Activated CD4-positive, alpha-beta T cell treated with anti-CD3 and anti-CD28 coated beads, Interleukin-2, amount 10 ng/mL, durations not matched to agents 7 days and 5 days (primary cell): ENCODE measurements at regions of chr12 and their contacts with region 1.

Region 1: DNA sequence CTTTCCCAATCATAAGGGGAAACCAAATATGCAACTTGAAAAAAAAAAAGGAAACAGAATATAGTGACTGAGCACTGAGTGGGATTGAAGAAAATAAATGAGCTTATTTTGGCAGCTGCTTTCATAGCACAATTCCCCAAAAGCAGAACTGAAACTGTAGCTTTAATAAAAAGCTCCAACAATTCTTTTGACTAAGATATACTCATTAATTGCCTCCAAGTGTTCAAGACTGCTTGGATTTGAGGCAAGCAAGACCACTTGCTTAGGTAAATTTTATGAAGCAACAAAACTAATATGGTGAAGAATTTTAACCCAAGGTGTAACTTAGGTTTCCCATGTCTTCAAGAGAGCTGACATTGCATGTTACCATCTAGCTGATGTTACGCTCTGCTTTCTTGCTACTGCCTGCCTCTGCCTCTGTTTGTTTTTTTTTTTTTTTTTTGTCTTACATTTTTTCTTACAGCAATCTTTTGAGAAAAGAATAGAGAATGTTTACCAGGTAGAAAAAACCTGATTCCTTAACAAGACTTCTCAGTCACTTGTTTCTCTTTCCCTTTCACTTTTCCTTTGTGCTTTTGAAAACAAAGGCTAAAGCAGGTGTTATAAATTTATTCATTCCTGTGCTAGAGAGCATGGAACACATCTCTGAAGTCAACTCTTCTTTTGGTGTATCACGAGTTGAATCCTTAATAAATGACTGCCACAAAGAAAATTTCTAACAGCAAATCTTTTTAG is 134.4 kb downstream of the BCAT1 start:
- DNase-seq: no peak
- H3K4me3 Mint-ChIP-seq: peak overlapping the region; percentile 74
- H3K27ac Mint-ChIP-seq: peak overlapping the region; percentile 93
- H3K4me1 Mint-ChIP-seq: peaks cover 23% of the 10 kb centered on the region
- H3K27me3 Mint-ChIP-seq: no peaks in the 10 kb centered on the region

Region 2: GRCh38 chr12:24803430-24804245 is 10.9 kb before region 1 on chr12:
- CTCF ChIA-PET with region 1: interaction called, 10 read pairs
- POLR2A ChIA-PET with region 1: no interaction called
- DNase-seq: no peak
- H3K4me3 Mint-ChIP-seq: no peak overlapping the region
- H3K27ac Mint-ChIP-seq: peak overlapping the region; percentile 33
- H3K4me1 Mint-ChIP-seq: peaks cover 15% of the 10 kb centered on the region
- H3K27me3 Mint-ChIP-seq: no peaks in the 10 kb centered on the region